CD8-positive, alpha-beta T cell (primary cell): ENCODE measurements at regions of chr18 and their contacts with region 1.

Region 1: DNA sequence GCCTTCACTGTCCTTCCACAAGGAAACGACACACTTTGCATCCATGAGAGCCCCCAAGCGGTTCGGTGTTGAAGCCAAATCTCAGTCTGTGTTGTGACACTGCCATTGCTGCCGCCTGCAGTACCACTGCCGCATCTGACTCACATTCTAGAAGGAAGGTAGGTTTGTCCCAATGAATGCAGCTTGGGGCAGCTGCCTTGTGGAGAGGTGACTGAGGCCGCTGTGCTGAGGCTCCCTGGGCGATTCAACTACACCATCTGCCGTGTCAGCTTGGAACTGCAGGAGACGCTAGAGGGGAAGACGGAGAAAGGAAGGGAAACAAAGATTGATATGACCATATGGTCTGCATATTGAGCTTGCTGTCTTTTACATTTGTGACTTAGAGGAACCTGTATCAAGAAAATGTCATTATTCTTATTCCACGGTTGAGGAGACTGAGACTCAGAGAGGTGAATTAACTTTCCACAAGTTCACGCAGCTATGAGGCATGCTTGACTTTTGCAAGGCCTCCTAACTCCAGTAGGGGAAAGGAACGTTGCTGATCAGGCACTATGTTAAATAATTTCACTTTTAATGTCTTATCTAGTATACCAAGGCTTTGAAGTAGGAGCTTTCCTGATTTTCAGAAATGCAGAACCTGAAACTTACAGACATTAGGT is 43.5 kb upstream of the LMAN1 start:
- DNase-seq: peak; percentile 45 to 76 (median 57)
- ATAC-seq: peak; percentile 98
- H3K4me3 ChIP-seq: no peak overlapping the region
- H3K4me3 Mint-ChIP-seq: no peak overlapping the region
- H3K27ac ChIP-seq: no peak overlapping the region
- H3K27ac Mint-ChIP-seq: no peak overlapping the region
- H3K4me1 ChIP-seq: no peaks in the 10 kb centered on the region
- H3K4me1 Mint-ChIP-seq: no peaks in the 10 kb centered on the region
- H3K27me3 ChIP-seq: no peaks in the 10 kb centered on the region
- H3K27me3 Mint-ChIP-seq: peaks cover 5% of the 10 kb centered on the region
- CTCF ChIP-seq: peak; percentile 78

Region 2: GRCh38 chr18:58781627-58782194 is 620.9 kb before region 1 on chr18:
- CTCF ChIA-PET with region 1: no interaction called
- POLR2A ChIA-PET with region 1: no interaction called
- intact Hi-C with region 1: loop called in 1 of 2 experiments (anchors 2 kb)
- DNase-seq: peak; percentile 25 to 76 (median 59)
- ATAC-seq: peak; percentile 61
- H3K4me3 ChIP-seq: no peak overlapping the region
- H3K4me3 Mint-ChIP-seq: no peak overlapping the region
- H3K27ac ChIP-seq: no peak overlapping the region
- H3K27ac Mint-ChIP-seq: no peak overlapping the region
- H3K4me1 ChIP-seq: no peaks in the 10 kb centered on the region
- H3K4me1 Mint-ChIP-seq: no peaks in the 10 kb centered on the region
- H3K27me3 ChIP-seq: peaks cover 0 to 2% of the 10 kb centered on the region in 2 experiments
- H3K27me3 Mint-ChIP-seq: peaks cover 32% of the 10 kb centered on the region
- CTCF ChIP-seq: peak; percentile 76

Region 3: GRCh38 chr18:59085797-59086196 is 316.8 kb before region 1 on chr18:
- CTCF ChIA-PET with region 1: interaction called, 18 read pairs
- POLR2A ChIA-PET with region 1: no interaction called
- intact Hi-C with region 1: loop called (anchors 2 kb)
- DNase-seq: no peak
- ATAC-seq: no peak
- H3K4me3 ChIP-seq: no peak overlapping the region
- H3K4me3 Mint-ChIP-seq: no peak overlapping the region
- H3K27ac ChIP-seq: no peak overlapping the region
- H3K27ac Mint-ChIP-seq: no peak overlapping the region
- H3K4me1 ChIP-seq: no peaks in the 10 kb centered on the region
- H3K4me1 Mint-ChIP-seq: peaks cover 10% of the 10 kb centered on the region
- H3K27me3 ChIP-seq: peaks cover 0 to 5% of the 10 kb centered on the region in 2 experiments
- H3K27me3 Mint-ChIP-seq: peaks cover 19% of the 10 kb centered on the region
- CTCF ChIP-seq: no peak

Region 4: GRCh38 chr18:59249205-59249774 is 153.3 kb before region 1 on chr18:
- CTCF ChIA-PET with region 1: interaction called, 25 read pairs
- POLR2A ChIA-PET with region 1: no interaction called
- intact Hi-C with region 1: loop called (anchors 2 kb)
- DNase-seq: peak in 2 of 9 experiments; percentile 31 to 42
- ATAC-seq: no peak
- H3K4me3 ChIP-seq: no peak overlapping the region
- H3K4me3 Mint-ChIP-seq: no peak overlapping the region
- H3K27ac ChIP-seq: no peak overlapping the region
- H3K27ac Mint-ChIP-seq: no peak overlapping the region
- H3K4me1 ChIP-seq: no peaks in the 10 kb centered on the region
- H3K4me1 Mint-ChIP-seq: no peaks in the 10 kb centered on the region
- H3K27me3 ChIP-seq: peaks cover 0 to 6% of the 10 kb centered on the region in 2 experiments
- H3K27me3 Mint-ChIP-seq: peaks cover 36% of the 10 kb centered on the region
- CTCF ChIP-seq: no peak

Region 5: DNA sequence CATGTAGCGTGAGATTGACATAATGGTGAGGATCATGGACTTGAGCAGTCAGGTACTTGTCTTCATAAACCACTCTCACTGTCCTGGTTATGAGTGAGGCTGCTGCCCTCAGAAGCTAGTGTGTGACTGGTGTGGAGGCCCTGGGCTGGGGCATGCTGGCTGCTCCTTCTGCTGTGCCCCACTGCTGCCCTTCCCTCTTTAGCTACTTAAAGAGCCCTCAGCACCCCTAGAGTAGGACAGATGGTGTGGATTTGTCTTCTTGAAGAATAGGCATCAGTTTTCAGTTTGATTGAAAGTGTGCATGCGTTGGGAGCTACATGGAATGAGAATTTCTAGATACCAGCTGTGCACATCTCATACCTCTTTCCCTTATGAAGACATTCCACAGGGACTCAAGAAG is 99.6 kb before region 1 on chr18:
- CTCF ChIA-PET with region 1: interaction called, 130 read pairs
- POLR2A ChIA-PET with region 1: interaction called, 4 read pairs
- intact Hi-C with region 1: loop called in 1 of 2 experiments (anchors 2 kb)
- DNase-seq: no peak
- ATAC-seq: no peak
- H3K4me3 ChIP-seq: no peak overlapping the region
- H3K4me3 Mint-ChIP-seq: no peak overlapping the region
- H3K27ac ChIP-seq: no peak overlapping the region
- H3K27ac Mint-ChIP-seq: no peak overlapping the region
- H3K4me1 ChIP-seq: peaks cover 1% of the 10 kb centered on the region
- H3K4me1 Mint-ChIP-seq: no peaks in the 10 kb centered on the region
- H3K27me3 ChIP-seq: peaks cover 0 to 2% of the 10 kb centered on the region in 2 experiments
- H3K27me3 Mint-ChIP-seq: peaks cover 27% of the 10 kb centered on the region
- CTCF ChIP-seq: no peak

Region 6: DNA sequence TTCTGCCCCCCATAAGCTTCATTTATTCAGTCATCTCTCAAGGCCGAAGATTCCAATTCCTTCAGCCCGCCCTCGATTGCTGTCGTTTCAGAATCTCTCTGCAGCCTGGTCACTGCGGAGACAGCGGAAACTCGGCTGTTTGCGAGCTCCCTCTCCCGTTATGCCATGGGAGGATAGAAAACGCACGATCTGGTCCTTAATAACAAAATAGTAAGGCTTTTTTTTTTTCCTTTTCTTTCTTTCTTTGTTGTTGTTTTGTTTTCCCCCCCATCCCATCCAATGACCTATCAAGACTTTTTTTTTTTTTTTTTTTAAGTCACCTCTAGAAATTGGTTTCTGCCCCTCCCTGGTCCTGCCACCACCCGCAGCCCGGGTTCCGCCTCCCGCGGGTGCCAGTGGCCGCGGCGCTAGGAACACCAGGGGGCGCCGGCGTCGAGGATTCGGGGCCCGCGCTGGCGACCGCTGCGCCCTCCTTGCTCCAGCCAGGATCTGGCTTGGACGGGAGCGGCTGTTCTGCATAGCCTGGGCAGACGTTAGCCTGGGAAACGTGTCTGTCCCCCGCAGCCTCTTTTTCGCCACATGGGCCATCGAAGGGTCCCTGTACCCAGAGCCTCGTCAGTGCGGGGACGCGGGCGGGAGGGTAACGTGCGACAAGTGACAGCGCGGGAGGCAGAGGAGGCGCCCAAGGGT is 94.2 kb before region 1 on chr18:
- CTCF ChIA-PET with region 1: interaction called, 130 read pairs
- POLR2A ChIA-PET with region 1: interaction called, 4 read pairs
- intact Hi-C with region 1: loop called in 1 of 2 experiments (anchors 2 kb)
- DNase-seq: peak; percentile 30 to 76 (median 61)
- ATAC-seq: peak; percentile 84
- H3K4me3 ChIP-seq: peak overlapping the region in 1 of 2 experiments; percentile 29
- H3K4me3 Mint-ChIP-seq: peak overlapping the region; percentile 67
- H3K27ac ChIP-seq: no peak overlapping the region
- H3K27ac Mint-ChIP-seq: no peak overlapping the region
- H3K4me1 ChIP-seq: peaks cover 5% of the 10 kb centered on the region
- H3K4me1 Mint-ChIP-seq: no peaks in the 10 kb centered on the region
- H3K27me3 ChIP-seq: peaks cover 0 to 5% of the 10 kb centered on the region in 2 experiments
- H3K27me3 Mint-ChIP-seq: peaks cover 45% of the 10 kb centered on the region
- CTCF ChIP-seq: peak; percentile 76

Region 7: GRCh38 chr18:59387687-59388565 is 14.6 kb before region 1 on chr18:
- CTCF ChIA-PET with region 1: interaction called, 17 read pairs
- POLR2A ChIA-PET with region 1: no interaction called
- intact Hi-C with region 1: no loop called
- DNase-seq: no peak
- ATAC-seq: no peak
- H3K4me3 ChIP-seq: no peak overlapping the region
- H3K4me3 Mint-ChIP-seq: no peak overlapping the region
- H3K27ac ChIP-seq: no peak overlapping the region
- H3K27ac Mint-ChIP-seq: no peak overlapping the region
- H3K4me1 ChIP-seq: no peaks in the 10 kb centered on the region
- H3K4me1 Mint-ChIP-seq: no peaks in the 10 kb centered on the region
- H3K27me3 ChIP-seq: peaks cover 0 to under 1% of the 10 kb centered on the region in 2 experiments
- H3K27me3 Mint-ChIP-seq: peaks cover 12% of the 10 kb centered on the region
- CTCF ChIP-seq: no peak

Region 8: DNA sequence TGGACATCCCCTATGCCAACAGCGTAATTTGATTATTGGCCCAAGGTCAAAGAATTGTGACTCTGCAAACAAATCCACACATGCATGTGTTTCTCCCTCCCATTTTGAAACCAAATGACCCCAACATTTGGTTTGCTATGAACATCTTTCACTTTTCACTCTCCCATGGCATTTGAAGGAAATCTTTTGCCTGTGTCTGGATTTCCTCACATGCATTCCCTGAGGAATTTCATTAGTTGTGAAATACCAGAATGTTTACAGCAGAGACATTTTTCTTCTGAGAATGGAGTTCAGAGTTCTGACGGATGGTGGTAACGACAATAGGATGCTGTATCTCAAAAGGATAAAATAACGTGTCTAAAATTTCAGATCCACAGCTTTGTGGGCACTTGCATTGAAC is 16.8 kb after region 1 on chr18:
- CTCF ChIA-PET with region 1: no interaction called
- POLR2A ChIA-PET with region 1: no interaction called
- intact Hi-C with region 1: no loop called
- DNase-seq: no peak
- ATAC-seq: no peak
- H3K4me3 ChIP-seq: no peak overlapping the region
- H3K4me3 Mint-ChIP-seq: no peak overlapping the region
- H3K27ac ChIP-seq: no peak overlapping the region
- H3K27ac Mint-ChIP-seq: no peak overlapping the region
- H3K4me1 ChIP-seq: no peaks in the 10 kb centered on the region
- H3K4me1 Mint-ChIP-seq: no peaks in the 10 kb centered on the region
- H3K27me3 ChIP-seq: no peaks in the 10 kb centered on the region
- H3K27me3 Mint-ChIP-seq: peaks cover 28% of the 10 kb centered on the region
- CTCF ChIP-seq: no peak